ENCODE measurements at regions of chr14 and their contacts with region 1.

Region 1: DNA sequence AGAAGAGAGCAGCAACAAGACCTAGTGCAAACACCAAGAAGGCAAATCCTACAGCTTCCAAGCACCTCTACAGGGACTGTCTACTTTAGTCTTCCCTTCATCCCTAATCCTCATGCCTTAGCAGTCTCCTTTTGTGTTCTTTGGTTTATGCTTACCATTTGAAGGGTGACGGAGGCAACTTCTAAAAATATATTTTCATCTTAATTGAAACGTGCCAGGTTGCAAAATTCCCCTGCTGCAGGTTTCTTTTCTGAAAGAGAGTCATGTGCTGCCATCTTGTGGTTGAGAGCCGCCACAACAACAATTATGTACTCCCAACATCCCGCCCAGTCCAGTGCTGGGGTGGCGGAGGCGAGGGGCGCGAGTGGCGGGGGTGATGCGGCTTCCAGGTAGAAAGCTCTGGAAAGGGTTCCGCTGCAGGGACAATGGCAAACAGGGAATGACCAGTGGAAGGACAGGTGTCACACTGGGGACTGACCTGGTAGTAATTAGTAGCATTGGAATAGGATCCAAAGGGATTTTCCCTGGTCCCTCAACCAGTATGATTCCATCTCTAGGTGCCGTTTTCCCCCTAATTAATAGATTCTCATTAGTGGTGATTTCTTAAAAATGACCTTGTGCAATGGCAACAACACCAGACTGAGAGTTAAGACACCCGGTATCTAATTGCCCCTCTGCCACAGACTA is 80.3 kb upstream of the GNG2 start:
- DNase-seq: peak in 1 of 2 experiments; percentile 69
- H3K4me3 ChIP-seq: no peak overlapping the region
- H3K27ac ChIP-seq: no peak overlapping the region
- H3K4me1 ChIP-seq: 0 out of 2 replicates have a peak, but pooled peaks cover 4% of the 10 kb centered on the region
- H3K27me3 ChIP-seq: no peaks in the 10 kb centered on the region
- CTCF ChIP-seq: peak; percentile 91

Region 2: GRCh38 chr14:50954811-50955372 is 825.3 kb before region 1 on chr14:
- CTCF ChIA-PET with region 1: no interaction called
- POLR2A ChIA-PET with region 1: no interaction called
- intact Hi-C with region 1: loop called (anchors 2 kb)
- DNase-seq: peak; percentile 12 to 52
- H3K4me3 ChIP-seq: peak overlapping the region; percentile 9; the same call in 1 of the 2 replicates
- H3K27ac ChIP-seq: peak overlapping the region; percentile 84
- H3K4me1 ChIP-seq: peaks cover 31% of the 10 kb centered on the region
- H3K27me3 ChIP-seq: no peaks in the 10 kb centered on the region
- CTCF ChIP-seq: peak; percentile 75

Region 3: DNA sequence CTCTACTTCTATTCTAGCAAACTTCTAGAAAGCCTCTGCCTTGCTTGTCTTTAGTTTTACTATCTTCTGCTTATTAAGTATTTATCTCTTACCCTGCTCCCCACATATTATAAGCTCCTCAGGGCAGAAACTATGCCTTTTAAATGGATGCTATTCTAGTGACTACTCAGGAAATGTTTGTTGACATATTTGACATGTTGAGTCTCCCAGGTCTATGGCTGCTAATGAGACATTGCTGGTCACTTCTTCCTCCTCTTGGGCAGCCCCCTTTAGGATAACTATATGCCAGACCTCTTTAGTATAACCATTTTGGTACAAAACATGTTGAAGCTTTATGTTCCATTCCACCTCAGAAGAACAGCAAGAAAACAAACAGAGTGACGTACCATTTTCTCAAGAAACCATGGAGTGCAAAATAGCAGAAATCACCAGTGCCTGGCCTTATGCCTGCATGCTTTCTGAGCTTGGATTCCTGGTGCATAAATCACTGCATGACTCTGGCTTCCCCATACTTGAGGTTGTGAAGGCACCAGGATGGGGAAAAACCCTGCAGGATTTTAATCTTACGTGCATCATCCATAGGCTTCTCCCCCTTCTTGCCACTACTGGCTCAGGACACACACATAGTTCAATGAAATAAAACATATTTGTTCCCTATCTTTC is 337.5 kb before region 1 on chr14:
- CTCF ChIA-PET with region 1: no interaction called
- POLR2A ChIA-PET with region 1: no interaction called
- intact Hi-C with region 1: loop called (anchors 5 kb)
- DNase-seq: peak; percentile 64 to 90
- H3K4me3 ChIP-seq: no peak overlapping the region; the same call in 1 of the 2 replicates
- H3K27ac ChIP-seq: peak overlapping the region; percentile 93
- H3K4me1 ChIP-seq: peaks cover 45% of the 10 kb centered on the region
- H3K27me3 ChIP-seq: no peaks in the 10 kb centered on the region
- CTCF ChIP-seq: no peak

Region 4: GRCh38 chr14:51979088-51979709 is 199.1 kb after region 1 on chr14:
- CTCF ChIA-PET with region 1: interaction called, 7 read pairs
- POLR2A ChIA-PET with region 1: no interaction called
- intact Hi-C with region 1: loop called (anchors 1 kb)
- DNase-seq: peak in 1 of 2 experiments; percentile 68
- H3K4me3 ChIP-seq: no peak overlapping the region
- H3K27ac ChIP-seq: no peak overlapping the region
- H3K4me1 ChIP-seq: no peaks in the 10 kb centered on the region
- H3K27me3 ChIP-seq: no peaks in the 10 kb centered on the region
- CTCF ChIP-seq: peak; percentile 94